Left cardiac atrium (tissue), 4 donors: ENCODE measurements at regions of chr20 and their contacts with region 1.

Region 1: DNA sequence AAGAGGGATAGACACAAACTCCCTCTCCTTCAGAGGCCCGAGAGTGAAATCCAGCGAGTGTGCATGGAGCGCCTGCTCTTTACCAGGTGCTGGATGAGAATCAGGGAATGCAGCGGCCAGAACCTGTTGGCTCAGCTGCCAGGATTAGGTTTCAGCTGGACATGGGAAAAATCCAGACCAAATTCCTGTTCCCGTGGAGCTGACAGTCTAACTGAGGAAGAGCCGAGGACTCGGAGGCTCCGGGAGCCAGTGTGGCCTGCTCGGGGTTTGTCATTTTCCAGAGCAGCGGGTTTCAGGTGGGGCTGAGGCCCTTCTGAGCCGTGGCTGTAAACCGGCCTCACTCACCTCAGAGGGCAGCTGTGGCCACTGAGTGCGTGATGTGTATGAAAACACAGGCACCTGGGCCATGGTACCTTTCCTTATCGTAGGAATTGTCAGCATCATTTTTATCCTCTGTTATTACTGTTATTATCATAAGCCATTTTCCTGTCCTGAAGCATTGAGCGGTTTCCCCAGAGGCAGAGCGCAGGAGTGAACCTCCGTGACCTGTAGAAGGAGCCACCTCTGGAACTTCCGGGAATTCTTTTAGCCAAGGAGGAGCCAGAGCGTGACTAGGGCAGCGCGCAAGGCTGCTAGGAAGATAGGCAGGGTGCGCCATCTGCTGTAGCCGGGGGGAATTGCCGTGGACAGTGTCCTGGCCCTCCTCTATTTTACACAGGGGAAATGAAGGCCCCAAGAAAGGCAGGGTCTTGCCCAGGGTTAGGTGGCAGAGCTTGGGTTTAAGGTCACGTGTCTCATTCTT is 27.3 kb downstream of the PKIG start:
- DNase-seq: peak; percentile 90
- ATAC-seq: peak; percentile 93 to 94

Region 2: DNA sequence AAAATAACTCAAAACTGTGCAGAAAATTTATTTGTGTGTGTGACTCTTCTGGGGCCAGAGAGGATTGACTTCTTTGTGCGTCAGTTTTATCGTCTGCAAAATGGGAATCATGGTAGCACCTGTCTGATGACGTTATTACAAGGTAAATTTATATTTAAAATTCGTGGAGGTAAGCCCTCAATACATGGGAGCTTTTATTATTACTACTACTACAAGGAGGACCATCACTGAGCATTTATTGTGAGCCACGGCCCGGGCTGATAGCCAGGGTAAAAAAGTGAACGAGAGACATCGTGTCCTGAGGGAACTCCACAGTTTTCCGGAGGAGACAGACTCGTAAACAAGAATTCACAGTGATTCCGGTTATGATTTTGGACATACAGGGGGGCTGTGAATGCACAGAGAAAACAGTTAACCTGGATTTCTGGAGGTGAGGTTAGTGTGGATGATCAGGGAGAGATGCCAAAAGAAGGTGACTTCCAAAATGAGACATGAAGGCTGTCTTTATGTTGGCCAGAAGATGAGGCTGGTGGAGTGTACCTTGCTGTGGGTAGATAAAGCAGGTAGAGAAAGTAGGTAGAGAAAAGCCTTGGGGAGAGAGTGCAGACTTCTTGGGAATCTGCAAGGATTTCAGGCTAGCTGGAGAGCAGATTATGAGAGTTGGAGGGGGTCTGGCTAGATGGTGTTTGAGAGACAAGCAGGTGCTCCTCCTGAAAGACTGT is 77.3 kb before region 1 on chr20:
- intact Hi-C with region 1: loop called (anchors 5 kb)
- DNase-seq: peak; percentile 39
- ATAC-seq: peak in 1 of 2 donors; percentile 31

Region 3: DNA sequence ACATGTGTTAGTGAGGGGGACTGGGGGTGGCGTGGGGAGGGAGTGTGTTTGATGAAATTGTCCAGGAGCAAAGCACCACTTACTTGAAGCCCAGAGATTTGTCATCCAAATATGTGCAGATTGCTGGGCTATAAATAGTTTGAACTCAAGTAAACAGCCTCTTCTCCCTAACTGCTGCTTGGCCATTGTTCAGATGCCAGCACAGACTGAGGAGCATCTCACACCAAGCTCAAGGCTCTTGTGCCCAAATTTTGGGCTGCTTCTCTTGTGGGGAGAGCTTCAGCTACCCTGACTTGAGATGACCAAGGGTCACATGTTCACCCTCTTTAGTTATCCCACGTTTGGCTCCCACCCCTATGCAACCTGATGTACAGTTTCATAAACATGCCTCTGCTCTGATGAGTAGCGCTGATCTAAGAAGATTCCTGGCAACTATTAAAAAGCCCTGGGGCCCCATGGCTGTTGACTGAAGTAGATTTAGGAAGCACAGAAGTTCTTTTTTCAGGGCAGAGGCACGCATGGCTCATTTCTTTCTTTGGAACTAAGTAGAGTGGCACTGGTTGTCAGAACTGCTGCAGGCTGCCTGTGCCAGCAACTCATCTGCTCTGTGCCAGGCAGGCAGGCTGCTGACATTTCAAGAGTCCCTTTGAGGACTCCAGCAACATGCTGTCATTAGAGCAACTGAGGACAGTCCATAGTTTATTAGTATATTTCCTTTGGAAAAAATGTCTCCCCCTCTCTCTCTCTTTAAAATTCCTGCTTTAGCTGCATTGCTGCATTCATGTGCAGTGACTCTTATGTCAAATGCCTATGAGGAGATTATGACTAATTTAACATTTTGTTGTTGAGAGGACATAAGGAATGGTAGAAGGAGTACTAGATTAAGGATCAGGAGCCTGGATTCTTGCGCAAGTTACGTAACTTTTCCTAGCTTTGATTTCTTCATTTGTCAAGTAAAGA is 36.9 kb before region 1 on chr20:
- intact Hi-C with region 1: loop called in 1 of 2 experiments (anchors 5 kb)
- DNase-seq: peak; percentile 56
- ATAC-seq: peak; percentile 87 to 93

Region 4: DNA sequence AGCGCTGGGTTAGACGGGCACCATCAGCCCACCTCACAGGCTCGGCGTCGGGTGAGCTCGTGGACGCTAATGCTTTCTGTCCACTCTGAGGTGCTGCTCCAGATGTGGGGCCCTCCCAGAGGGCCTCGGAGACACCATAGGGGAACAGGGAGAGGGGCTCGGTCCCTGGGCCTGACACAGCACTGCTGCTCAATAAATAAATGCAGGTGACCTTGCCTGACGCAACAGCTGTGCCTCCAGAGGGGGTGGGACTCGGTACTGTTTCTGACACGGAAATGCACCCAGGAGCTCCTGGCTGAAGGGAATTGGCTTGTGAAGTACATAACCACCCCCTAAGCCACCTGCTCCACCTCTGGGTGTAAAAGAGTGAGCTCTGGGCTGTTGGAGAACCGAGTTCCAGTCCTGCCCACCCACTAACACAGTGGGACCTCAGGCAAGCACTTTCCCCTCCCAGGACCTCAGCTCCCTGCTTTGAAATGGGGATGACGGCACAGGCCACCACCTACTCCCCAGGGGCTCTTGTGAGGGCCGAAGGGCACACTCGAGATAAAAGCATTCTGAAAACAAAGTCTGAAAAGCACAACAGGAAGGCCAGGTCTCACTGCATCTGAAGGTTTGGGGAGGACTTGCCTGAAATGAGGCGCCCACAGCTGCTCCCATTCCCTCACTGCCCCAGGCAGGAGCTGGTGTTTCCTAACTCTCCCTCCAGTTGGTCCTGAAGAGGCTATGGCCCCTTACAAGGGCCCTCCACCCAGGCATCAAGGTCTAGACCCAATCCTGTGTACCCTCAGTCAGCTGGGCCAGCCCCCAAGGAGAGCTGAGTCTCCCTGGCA is 142.6 kb after region 1 on chr20:
- intact Hi-C with region 1: no loop called
- DNase-seq: no peak
- ATAC-seq: no peak

Region 5: GRCh38 chr20:45235995-45236394 is 626.3 kb after region 1 on chr20:
- intact Hi-C with region 1: no loop called
- DNase-seq: no peak
- ATAC-seq: no peak